ENCODE measurements at regions of chr1 and their contacts with region 1.

Region 1: DNA sequence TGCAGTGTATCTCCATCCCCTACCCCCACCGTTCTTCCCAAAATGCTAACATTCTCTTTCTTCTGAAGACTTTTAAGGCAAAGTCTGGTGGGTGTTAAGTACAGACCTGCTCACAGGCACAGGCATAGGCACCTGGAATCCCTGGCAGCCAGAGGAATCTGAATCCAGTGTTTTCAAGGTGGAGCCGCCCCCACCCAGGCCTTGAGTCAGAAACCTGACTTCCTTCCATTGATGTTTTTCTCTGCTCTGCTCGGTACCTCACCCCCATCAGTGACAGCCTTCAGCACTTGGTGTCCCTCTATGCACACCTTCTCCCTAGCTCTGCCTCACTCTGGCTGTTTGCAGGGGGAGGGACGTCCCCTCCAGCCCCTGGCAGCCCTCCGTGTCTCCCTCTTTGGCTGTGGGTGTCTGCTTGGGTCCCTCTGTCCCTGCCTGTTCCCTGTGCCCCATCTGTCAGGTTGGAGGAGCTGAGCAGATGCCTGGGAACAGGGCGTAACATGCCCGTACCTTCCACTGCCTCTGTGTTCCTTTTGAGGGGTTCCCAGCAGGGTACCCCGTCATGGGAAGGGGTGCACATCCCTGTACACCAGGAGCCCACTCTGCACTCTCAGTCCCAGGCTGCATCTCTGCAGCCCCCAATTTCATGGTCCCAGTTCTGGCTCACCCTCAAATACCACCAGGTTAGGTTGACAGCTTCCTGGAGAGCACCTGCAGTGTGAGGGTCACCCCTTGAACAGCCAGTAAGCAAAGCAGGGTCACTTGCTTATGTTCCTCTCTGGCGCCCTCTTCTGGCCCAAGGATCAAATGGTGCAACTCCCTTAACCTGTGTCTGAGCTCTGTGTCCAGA is 6.7 kb downstream of the NCDN start:
- DNase-seq: peak; percentile 63 to 77 (median 67)
- H3K4me3 ChIP-seq: no peak overlapping the region
- H3K4me3 Mint-ChIP-seq: no peak overlapping the region
- H3K27ac ChIP-seq: no peak overlapping the region
- H3K27ac Mint-ChIP-seq: peak overlapping the region in 2 of 7 donors; percentile 43 to 59
- H3K4me1 ChIP-seq: peaks cover 0 to 4% of the 10 kb centered on the region in 2 donors
- H3K4me1 Mint-ChIP-seq: peaks cover 34% of the 10 kb centered on the region
- H3K27me3 ChIP-seq: no peaks in the 10 kb centered on the region
- H3K27me3 Mint-ChIP-seq: no peaks in the 10 kb centered on the region
- CTCF ChIP-seq: peak; percentile 82

Region 2: GRCh38 chr1:35715568-35716002 is 151.3 kb after region 1 on chr1:
- intact Hi-C with region 1: loop called in 1 of 2 experiments (anchors 5 kb)
- DNase-seq: peak; percentile 59 to 68 (median 63)
- H3K4me3 ChIP-seq: no peak overlapping the region
- H3K4me3 Mint-ChIP-seq: peak overlapping the region in 1 of 2 donors; percentile 53
- H3K27ac ChIP-seq: no peak overlapping the region
- H3K27ac Mint-ChIP-seq: peak overlapping the region in 2 of 7 donors; percentile 41 to 46
- H3K4me1 ChIP-seq: peaks cover 19 to 32% of the 10 kb centered on the region in 2 donors
- H3K4me1 Mint-ChIP-seq: peaks cover 28% of the 10 kb centered on the region
- H3K27me3 ChIP-seq: no peaks in the 10 kb centered on the region
- H3K27me3 Mint-ChIP-seq: no peaks in the 10 kb centered on the region
- CTCF ChIP-seq: peak; percentile 89

Region 3: GRCh38 chr1:35726450-35727433 is 162.5 kb after region 1 on chr1:
- intact Hi-C with region 1: loop called (anchors 2 to 5 kb)
- DNase-seq: peak; percentile 36 to 56 (median 51)
- H3K4me3 ChIP-seq: no peak overlapping the region
- H3K4me3 Mint-ChIP-seq: no peak overlapping the region
- H3K27ac ChIP-seq: no peak overlapping the region
- H3K27ac Mint-ChIP-seq: peak overlapping the region in 1 of 7 donors; percentile 32
- H3K4me1 ChIP-seq: no peaks in the 10 kb centered on the region
- H3K4me1 Mint-ChIP-seq: peaks cover 6% of the 10 kb centered on the region
- H3K27me3 ChIP-seq: no peaks in the 10 kb centered on the region
- H3K27me3 Mint-ChIP-seq: peaks cover 0 to 3% (median 2%) of the 10 kb centered on the region in 3 donors
- CTCF ChIP-seq: peak; percentile 91

Region 4: GRCh38 chr1:35769759-35770446 is 205.6 kb after region 1 on chr1 and contains the start of gene CLSPN:
- intact Hi-C with region 1: loop called (anchors 2 to 5 kb)
- DNase-seq: peak; percentile 82 to 86 (median 84)
- H3K4me3 ChIP-seq: peak within 1 kb of the TSS; percentile 85 to 95 (median 86)
- H3K4me3 Mint-ChIP-seq: peak within 1 kb of the TSS; percentile 99
- H3K27ac ChIP-seq: peak within 1 kb of the TSS; percentile 76 to 77
- H3K27ac Mint-ChIP-seq: peak within 1 kb of the TSS; percentile 82 to 93 (median 89)
- H3K4me1 ChIP-seq: peaks cover 11 to 12% of the 10 kb centered on the region in 2 donors
- H3K4me1 Mint-ChIP-seq: peaks cover 14% of the 10 kb centered on the region
- H3K27me3 ChIP-seq: no peaks in the 10 kb centered on the region
- H3K27me3 Mint-ChIP-seq: peaks cover 0 to 2% (median 1%) of the 10 kb centered on the region in 3 donors
- CTCF ChIP-seq: no peak
- polyA plus RNA-seq, gene CLSPN: 0.13 to 0.24 TPM in 2 of 3 donors, not detected in the other